Body of pancreas (tissue), 4 donors: ENCODE measurements at regions of chr5 and their contacts with region 1.

Region 1: GRCh38 chr5:14405267-14405666 is 176.3 kb upstream of the OTULINL start:
- DNase-seq: no peak
- ATAC-seq: no peak
- H3K4me3 ChIP-seq: no peak overlapping the region
- H3K27ac ChIP-seq: no peak overlapping the region
- H3K4me1 ChIP-seq: no peaks in the 10 kb centered on the region
- H3K27me3 ChIP-seq: no peaks in the 10 kb centered on the region
- CTCF ChIP-seq: no peak
- POLR2A ChIP-seq: no peak

Region 2: GRCh38 chr5:14326035-14326903 is 79.0 kb before region 1 on chr5:
- intact Hi-C with region 1: no loop called
- DNase-seq: peak in 1 of 4 donors; percentile 35
- ATAC-seq: peak; percentile 53
- H3K4me3 ChIP-seq: no peak overlapping the region
- H3K27ac ChIP-seq: no peak overlapping the region
- H3K4me1 ChIP-seq: peaks cover 4% of the 10 kb centered on the region
- H3K27me3 ChIP-seq: no peaks in the 10 kb centered on the region
- CTCF ChIP-seq: peak in 6 of 7 experiments; percentile 13 to 59 (median 41)
- POLR2A ChIP-seq: no peak

Region 3: GRCh38 chr5:14463629-14464028 is 58.4 kb after region 1 on chr5:
- intact Hi-C with region 1: loop called (anchors 10 kb)
- DNase-seq: no peak
- ATAC-seq: no peak
- H3K4me3 ChIP-seq: no peak overlapping the region
- H3K27ac ChIP-seq: no peak overlapping the region
- H3K4me1 ChIP-seq: peaks cover 8% of the 10 kb centered on the region
- H3K27me3 ChIP-seq: no peaks in the 10 kb centered on the region
- CTCF ChIP-seq: no peak
- POLR2A ChIP-seq: no peak